PC-9 (cell line): ENCODE measurements at regions of chr16 and their contacts with region 1.

Region 1: GRCh38 chr16:68328151-68328859 is 17.5 kb downstream of the PRMT7 start:
- DNase-seq: peak; percentile 75 to 88
- H3K4me3 ChIP-seq: no peak overlapping the region
- H3K27ac ChIP-seq: 0 out of 2 replicates have a peak overlapping the region, but pooled peaks have one; percentile 25
- H3K4me1 ChIP-seq: peaks cover 6% of the 10 kb centered on the region
- H3K27me3 ChIP-seq: no peaks in the 10 kb centered on the region
- CTCF ChIP-seq: peak; percentile 91

Region 2: DNA sequence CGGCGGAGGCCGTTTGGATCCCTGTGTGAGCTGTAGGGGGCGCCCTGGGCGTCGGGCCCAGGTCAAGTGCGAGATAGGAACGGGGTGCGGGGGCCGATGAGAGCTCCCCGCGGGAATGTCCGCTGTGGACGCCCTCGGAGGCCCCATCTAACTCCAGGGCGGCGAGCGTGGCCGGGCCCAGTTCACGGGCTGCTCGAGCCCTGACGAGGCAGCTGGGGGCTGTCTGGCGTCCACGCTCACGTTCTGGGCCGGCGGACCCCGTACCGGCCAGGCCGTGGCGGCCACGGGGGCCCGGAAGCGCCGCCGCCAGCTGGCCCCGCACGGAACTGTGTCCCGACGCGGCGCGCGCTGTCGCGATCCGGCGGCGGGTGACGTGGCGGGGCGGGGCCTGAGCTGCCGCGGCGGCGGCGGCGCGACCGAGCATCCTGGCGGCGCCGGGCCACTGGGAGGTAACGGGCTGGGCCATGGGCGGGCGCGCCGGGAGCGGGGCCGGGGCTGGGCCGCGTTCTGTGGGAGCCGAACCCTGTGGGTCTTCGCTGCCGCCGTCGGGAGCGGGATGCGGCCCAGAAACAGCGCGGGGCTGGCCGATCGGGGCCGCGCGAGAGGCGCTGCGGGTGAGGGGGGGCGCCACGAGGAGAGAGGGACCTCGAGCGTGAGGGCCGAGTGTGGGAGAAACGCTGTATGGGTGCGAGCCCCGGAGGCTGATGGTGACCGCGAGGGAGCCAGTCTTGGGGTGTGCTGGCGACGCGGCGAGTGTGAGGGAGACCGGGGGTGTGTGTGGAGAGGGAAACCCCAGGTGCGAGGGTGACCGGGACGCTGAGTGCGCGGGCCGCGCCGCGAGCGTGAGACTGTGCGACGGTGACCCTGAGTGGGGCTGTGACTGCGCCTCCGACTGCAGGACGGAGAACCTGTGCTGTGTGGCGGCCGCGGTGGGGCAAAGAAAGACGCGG is 63.9 kb before region 1 on chr16 and contains the start of gene SLC7A6:
- CTCF ChIA-PET with region 1: interaction called, 10 read pairs
- POLR2A ChIA-PET with region 1: interaction called, 4 read pairs
- intact Hi-C with region 1: loop called (anchors 1 kb)
- DNase-seq: peak; percentile 43 to 77
- H3K4me3 ChIP-seq: peak within 1 kb of the TSS; percentile 86
- H3K27ac ChIP-seq: peak within 1 kb of the TSS; percentile 89
- H3K4me1 ChIP-seq: peaks cover 34% of the 10 kb centered on the region
- H3K27me3 ChIP-seq: no peaks in the 10 kb centered on the region
- CTCF ChIP-seq: peak; percentile 76
- total RNA-seq, gene SLC7A6: 28.6 and 44.7 TPM in 2 replicates

Region 3: DNA sequence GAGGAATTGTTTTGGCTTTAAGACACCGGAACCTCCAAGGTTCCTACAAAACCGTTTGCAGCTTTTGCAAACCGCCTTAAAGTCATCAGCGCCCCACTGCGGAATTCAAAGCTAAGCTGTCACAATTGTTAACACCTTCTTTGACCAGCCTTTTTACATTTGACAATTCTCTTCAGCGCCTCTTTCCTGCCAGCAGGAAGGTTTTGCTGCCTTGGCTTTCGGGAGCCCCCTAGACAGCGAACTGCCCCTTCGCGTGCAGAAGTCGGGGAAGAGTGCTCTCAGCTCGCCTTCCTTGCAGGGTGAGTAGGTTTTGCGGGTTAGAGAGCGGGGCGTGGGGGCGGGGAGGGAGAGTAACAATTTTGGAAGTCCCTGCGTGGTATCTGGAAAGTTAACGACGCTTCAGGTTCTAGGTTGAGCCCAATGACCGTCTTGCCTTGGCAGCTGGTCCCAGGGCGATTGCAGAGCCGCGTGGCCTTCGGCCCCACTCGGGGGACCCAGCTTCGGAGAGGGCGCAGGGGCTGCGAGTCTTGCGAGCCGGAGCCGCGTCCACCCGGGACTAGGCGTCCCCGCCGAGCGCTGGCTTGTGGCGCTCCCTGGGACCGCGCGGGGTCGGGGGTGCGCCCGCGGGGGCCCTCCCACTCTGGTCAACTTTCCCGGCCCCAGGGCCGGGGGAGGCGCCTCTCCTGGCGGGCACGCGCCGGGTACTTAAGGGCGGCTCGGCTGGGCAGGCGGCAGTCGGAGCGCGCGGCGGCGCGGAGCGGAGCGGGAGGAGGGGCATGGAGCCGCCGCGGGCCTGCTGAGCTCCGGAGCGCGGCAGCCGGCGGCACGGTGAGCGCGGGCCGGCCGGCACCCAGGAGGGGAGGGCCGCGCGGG is 777.4 kb after region 1 on chr16 and contains the start of gene HAS3:
- CTCF ChIA-PET with region 1: interaction called, 12 read pairs
- POLR2A ChIA-PET with region 1: no interaction called
- intact Hi-C with region 1: no loop called
- DNase-seq: peak; percentile 66 to 71
- H3K4me3 ChIP-seq: peak within 1 kb of the TSS; percentile 93
- H3K27ac ChIP-seq: no peak within 1 kb of the TSS
- H3K4me1 ChIP-seq: peaks cover 14% of the 10 kb centered on the region; the same call in 1 of the 2 replicates
- H3K27me3 ChIP-seq: no peaks in the 10 kb centered on the region
- CTCF ChIP-seq: peak; percentile 62; the same call in 1 of the 2 replicates
- total RNA-seq, gene HAS3: 2.5 and 2.7 TPM in 2 replicates